Naive thymus-derived CD4-positive, alpha-beta T cell (primary cell): ENCODE measurements at regions of chr9 and their contacts with region 1.

Region 1: GRCh38 chr9:16154521-16155078 is 601.8 kb downstream of the CCDC171 start:
- DNase-seq: peak in 2 of 9 donors; percentile 3 to 42
- ATAC-seq: peak; percentile 82
- H3K4me3 ChIP-seq: no peak overlapping the region
- H3K4me3 Mint-ChIP-seq: peak overlapping the region in 8 of 10 donors; percentile 32 to 70 (median 55)
- H3K27ac ChIP-seq: no peak overlapping the region
- H3K27ac Mint-ChIP-seq: peak overlapping the region in 1 of 9 donors; percentile 42
- H3K4me1 ChIP-seq: no peaks in the 10 kb centered on the region
- H3K4me1 Mint-ChIP-seq: peaks cover 5 to 18% (median 14%) of the 10 kb centered on the region in 7 donors
- H3K27me3 ChIP-seq: no peaks in the 10 kb centered on the region
- H3K27me3 Mint-ChIP-seq: peaks cover 4 to 29% (median 11%) of the 10 kb centered on the region in 5 donors

Region 2: DNA sequence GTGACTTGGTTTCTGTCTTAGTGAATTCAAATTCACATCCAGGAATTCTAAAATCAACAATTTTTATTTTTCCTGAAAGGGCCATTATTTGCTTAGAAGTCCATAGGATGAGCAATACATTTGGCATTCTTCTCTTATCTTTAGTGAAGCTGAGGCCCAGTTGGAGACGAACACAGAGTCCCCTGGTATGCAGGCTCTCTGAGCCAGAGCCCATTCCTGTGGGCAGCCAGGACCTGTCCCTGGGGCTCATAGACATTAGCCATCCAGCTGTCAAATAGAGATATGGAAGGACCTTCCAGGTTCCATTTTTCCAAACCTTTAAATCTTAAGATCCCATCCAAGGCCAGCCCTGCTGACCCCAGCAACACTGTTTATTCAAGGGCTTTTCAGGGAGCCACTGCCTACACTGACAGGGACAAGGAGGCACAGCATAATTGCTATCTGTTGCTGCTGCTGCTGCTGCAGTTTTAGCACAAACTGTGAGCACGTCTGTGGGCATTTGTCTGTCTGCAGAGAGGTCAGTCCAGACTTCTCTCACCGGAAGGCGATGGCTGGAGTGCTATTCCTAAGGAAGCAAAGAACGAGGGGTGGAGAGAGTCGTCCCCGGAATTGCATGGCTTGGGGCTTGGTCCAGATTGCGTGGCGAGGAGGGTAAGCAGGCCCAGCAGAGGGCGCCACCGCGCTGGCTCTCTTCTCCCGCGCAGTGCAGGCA is 37.2 kb after region 1 on chr9:
- CTCF ChIA-PET with region 1: no interaction called
- POLR2A ChIA-PET with region 1: no interaction called
- intact Hi-C with region 1: no loop called
- DNase-seq: peak in 1 of 9 donors; percentile 30
- ATAC-seq: peak; percentile 80
- H3K4me3 ChIP-seq: no peak overlapping the region
- H3K4me3 Mint-ChIP-seq: peak overlapping the region in 1 of 10 donors; percentile 37
- H3K27ac ChIP-seq: no peak overlapping the region
- H3K27ac Mint-ChIP-seq: no peak overlapping the region
- H3K4me1 ChIP-seq: no peaks in the 10 kb centered on the region
- H3K4me1 Mint-ChIP-seq: peaks cover 0 to 2% (median 0%) of the 10 kb centered on the region in 7 donors
- H3K27me3 ChIP-seq: no peaks in the 10 kb centered on the region
- H3K27me3 Mint-ChIP-seq: peaks cover 0 to 25% (median 6%) of the 10 kb centered on the region in 5 donors

Region 3: GRCh38 chr9:16213781-16214515 is 59.3 kb after region 1 on chr9:
- CTCF ChIA-PET with region 1: no interaction called
- POLR2A ChIA-PET with region 1: no interaction called
- intact Hi-C with region 1: loop called in 1 of 2 experiments (anchors 10 kb)
- DNase-seq: no peak
- ATAC-seq: no peak
- H3K4me3 ChIP-seq: no peak overlapping the region
- H3K4me3 Mint-ChIP-seq: no peak overlapping the region
- H3K27ac ChIP-seq: no peak overlapping the region
- H3K27ac Mint-ChIP-seq: no peak overlapping the region
- H3K4me1 ChIP-seq: no peaks in the 10 kb centered on the region
- H3K4me1 Mint-ChIP-seq: no peaks in the 10 kb centered on the region
- H3K27me3 ChIP-seq: no peaks in the 10 kb centered on the region
- H3K27me3 Mint-ChIP-seq: peaks cover 0 to 8% (median 0%) of the 10 kb centered on the region in 5 donors

Region 4: GRCh38 chr9:17229945-17230560 is 1075.5 kb after region 1 on chr9:
- CTCF ChIA-PET with region 1: no interaction called
- POLR2A ChIA-PET with region 1: no interaction called
- intact Hi-C with region 1: no loop called
- DNase-seq: no peak
- ATAC-seq: no peak
- H3K4me3 ChIP-seq: no peak overlapping the region
- H3K4me3 Mint-ChIP-seq: no peak overlapping the region
- H3K27ac ChIP-seq: no peak overlapping the region
- H3K27ac Mint-ChIP-seq: no peak overlapping the region
- H3K4me1 ChIP-seq: no peaks in the 10 kb centered on the region
- H3K4me1 Mint-ChIP-seq: no peaks in the 10 kb centered on the region
- H3K27me3 ChIP-seq: no peaks in the 10 kb centered on the region
- H3K27me3 Mint-ChIP-seq: no peaks in the 10 kb centered on the region